ENCODE measurements at regions of chr1 and their contacts with region 1.

Region 1: GRCh38 chr1:114346480-114347029 is 164.4 kb downstream of the TRIM33 start:
- DNase-seq: peak; percentile 90
- ATAC-seq: peak; percentile 98
- H3K4me3 ChIP-seq: peak overlapping the region; percentile 49
- H3K27ac ChIP-seq: 0 out of 2 replicates have a peak overlapping the region, but pooled peaks have one; percentile 5
- H3K4me1 ChIP-seq: peaks cover 6% of the 10 kb centered on the region; the same call in 1 of the 2 replicates
- H3K27me3 ChIP-seq: peaks cover 5% of the 10 kb centered on the region; the same call in 1 of the 2 replicates
- CTCF ChIP-seq: peak; percentile 100; the same call in 1 of the 2 replicates
- POLR2A ChIP-seq: peak; percentile 43; the same call in 1 of the 2 replicates
- RAD21 ChIP-seq: peak; percentile 97

Region 2: GRCh38 chr1:114250683-114251572 is 95.6 kb before region 1 on chr1:
- CTCF ChIA-PET with region 1: no interaction called
- POLR2A ChIA-PET with region 1: no interaction called
- dilution Hi-C with region 1: no loop called
- in situ Hi-C with region 1: no loop called
- intact Hi-C with region 1: no loop called
- DNase-seq: no peak
- ATAC-seq: no peak
- H3K4me3 ChIP-seq: no peak overlapping the region
- H3K27ac ChIP-seq: no peak overlapping the region
- H3K4me1 ChIP-seq: no peaks in the 10 kb centered on the region
- H3K27me3 ChIP-seq: no peaks in the 10 kb centered on the region; the same call in none of the 2 replicates
- CTCF ChIP-seq: no peak
- POLR2A ChIP-seq: no peak
- RAD21 ChIP-seq: no peak

Region 3: DNA sequence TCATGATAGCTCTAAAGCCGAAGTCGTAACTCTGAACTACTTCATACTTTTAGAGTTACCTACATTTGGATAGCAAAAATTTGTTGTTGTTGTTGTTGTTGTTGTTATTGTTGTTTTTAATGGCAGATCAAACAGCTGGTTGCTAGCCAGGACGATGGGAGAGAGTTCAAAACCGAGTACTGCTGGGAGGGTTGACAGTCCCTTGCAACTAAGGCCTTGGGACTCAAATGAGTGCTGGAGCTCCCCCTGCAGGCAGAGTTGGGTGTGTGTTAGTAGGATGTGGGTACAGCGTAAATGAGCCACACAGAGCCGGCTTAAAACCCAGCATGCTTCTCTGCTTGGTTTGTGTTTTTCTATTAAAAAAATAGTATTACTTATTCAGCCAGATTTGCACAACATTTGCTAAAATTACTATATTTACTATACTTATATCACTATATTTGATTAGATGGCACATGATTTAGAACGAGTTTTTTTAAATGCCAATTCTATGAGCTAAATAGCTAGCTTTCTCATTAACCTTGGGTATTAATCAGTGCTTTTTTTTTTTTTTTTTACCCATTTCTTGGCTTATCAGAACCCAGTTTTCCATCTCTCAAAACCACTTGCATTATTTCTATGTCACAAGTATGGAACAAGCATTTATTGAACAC is 63.7 kb before region 1 on chr1:
- CTCF ChIA-PET with region 1: interaction called, 11 read pairs
- POLR2A ChIA-PET with region 1: no interaction called
- dilution Hi-C with region 1: no loop called
- in situ Hi-C with region 1: no loop called
- intact Hi-C with region 1: loop called (anchors 5 kb)
- DNase-seq: peak; percentile 87
- ATAC-seq: peak; percentile 100
- H3K4me3 ChIP-seq: no peak overlapping the region
- H3K27ac ChIP-seq: no peak overlapping the region
- H3K4me1 ChIP-seq: peaks cover 2% of the 10 kb centered on the region; the same call in 1 of the 2 replicates
- H3K27me3 ChIP-seq: peaks cover 6% of the 10 kb centered on the region
- CTCF ChIP-seq: peak; percentile 90
- POLR2A ChIP-seq: no peak
- RAD21 ChIP-seq: peak; percentile 74

Region 4: DNA sequence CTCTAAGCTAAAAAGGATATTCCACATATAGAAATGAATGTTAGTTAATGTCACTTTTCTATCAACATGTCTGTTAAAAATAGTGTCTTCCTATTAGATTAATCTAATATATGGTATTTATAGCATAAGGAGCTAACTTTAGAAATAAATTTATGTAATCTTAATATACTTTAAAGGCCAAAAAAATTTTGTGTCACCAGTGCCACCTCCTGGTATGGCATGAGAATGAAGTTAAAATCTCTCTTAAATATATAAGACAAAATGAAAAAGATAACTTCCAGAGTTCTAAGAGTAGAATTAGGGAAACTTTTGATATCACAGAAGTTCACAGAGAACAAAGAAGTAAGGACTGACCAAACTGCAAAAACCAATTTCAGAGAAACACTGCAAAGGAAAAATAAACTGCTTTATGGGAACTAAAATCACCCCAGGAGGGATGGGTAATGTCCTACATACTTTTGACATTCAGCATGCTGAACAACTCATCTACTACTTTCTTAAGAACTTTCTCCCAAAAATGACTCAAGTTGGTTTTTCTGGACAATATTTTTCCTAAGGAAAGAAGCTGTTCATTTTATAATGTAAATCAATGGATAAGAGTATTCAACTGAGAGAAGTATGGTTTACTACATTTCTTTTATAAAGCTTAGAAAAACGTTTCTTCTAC is 81.7 kb after region 1 on chr1:
- CTCF ChIA-PET with region 1: interaction called, 13 read pairs
- POLR2A ChIA-PET with region 1: interaction called, 3 read pairs
- dilution Hi-C with region 1: no loop called
- in situ Hi-C with region 1: no loop called
- intact Hi-C with region 1: loop called (anchors 2 kb)
- DNase-seq: peak; percentile 37
- ATAC-seq: peak; percentile 57
- H3K4me3 ChIP-seq: no peak overlapping the region
- H3K27ac ChIP-seq: no peak overlapping the region
- H3K4me1 ChIP-seq: no peaks in the 10 kb centered on the region
- H3K27me3 ChIP-seq: no peaks in the 10 kb centered on the region
- CTCF ChIP-seq: peak; percentile 53
- POLR2A ChIP-seq: no peak
- RAD21 ChIP-seq: peak; percentile 33

Region 5: DNA sequence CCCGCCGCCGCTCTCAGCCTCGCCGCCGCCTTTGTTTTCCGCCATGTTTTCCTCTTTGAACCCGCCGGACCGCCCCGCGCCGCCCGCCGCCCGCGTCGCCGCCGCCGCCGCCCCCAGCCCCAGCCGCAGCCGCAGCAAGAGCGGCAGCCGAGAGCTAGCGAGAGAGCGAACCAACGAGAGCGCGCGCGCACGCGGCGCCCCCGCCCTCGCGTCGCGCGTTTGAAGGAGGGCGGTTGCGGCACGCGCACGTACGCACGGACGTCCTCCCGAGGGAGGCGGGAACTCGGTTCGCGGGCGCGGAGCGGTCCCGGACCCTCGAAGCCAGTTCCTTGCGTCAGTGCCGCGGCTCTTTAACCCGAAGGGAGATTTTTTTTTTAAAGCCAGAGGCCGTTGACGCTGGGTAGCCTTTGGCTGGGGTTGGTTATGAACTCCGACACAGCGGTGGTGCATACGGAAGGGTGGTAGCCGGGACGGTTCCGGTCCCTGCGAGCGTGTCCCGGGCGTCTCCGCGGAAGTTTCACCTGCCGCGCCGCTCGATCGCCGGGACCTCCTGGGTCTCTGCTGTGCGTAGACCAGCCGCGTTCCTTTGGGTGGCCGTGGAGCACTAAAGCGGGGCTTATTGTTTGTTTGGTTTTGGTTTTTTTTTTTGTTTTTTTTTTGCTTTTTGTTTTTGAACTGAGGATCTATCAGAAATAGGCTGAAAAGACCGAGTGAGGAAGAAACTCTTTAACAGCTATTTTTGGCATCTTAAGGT is 164.7 kb after region 1 on chr1 and contains the start of gene TRIM33:
- CTCF ChIA-PET with region 1: no interaction called
- POLR2A ChIA-PET with region 1: no interaction called
- dilution Hi-C with region 1: no loop called
- in situ Hi-C with region 1: no loop called
- intact Hi-C with region 1: loop called (anchors 5 kb)
- DNase-seq: peak; percentile 94
- ATAC-seq: peak; percentile 92
- H3K4me3 ChIP-seq: peak within 1 kb of the TSS; percentile 82
- H3K27ac ChIP-seq: peak within 1 kb of the TSS; percentile 78
- H3K4me1 ChIP-seq: peaks cover 2% of the 10 kb centered on the region; the same call in 1 of the 2 replicates
- H3K27me3 ChIP-seq: no peaks in the 10 kb centered on the region
- CTCF ChIP-seq: no peak
- POLR2A ChIP-seq: peak; percentile 56; the same call in 1 of the 2 replicates
- RAD21 ChIP-seq: no peak
- total RNA-seq, gene TRIM33: 40.0 and 40.1 TPM in 2 replicates

Region 6: GRCh38 chr1:114558544-114558943 is 212.0 kb after region 1 on chr1:
- CTCF ChIA-PET with region 1: interaction called, 3 read pairs
- POLR2A ChIA-PET with region 1: no interaction called
- dilution Hi-C with region 1: no loop called
- in situ Hi-C with region 1: no loop called
- intact Hi-C with region 1: loop called (anchors 1 kb)
- DNase-seq: no peak
- ATAC-seq: no peak
- H3K4me3 ChIP-seq: no peak overlapping the region
- H3K27ac ChIP-seq: no peak overlapping the region
- H3K4me1 ChIP-seq: no peaks in the 10 kb centered on the region
- H3K27me3 ChIP-seq: no peaks in the 10 kb centered on the region
- CTCF ChIP-seq: 0 out of 2 replicates have a peak, but pooled peaks have one; percentile 24
- POLR2A ChIP-seq: no peak
- RAD21 ChIP-seq: 0 out of 2 replicates have a peak, but pooled peaks have one; percentile 5

Region 7: DNA sequence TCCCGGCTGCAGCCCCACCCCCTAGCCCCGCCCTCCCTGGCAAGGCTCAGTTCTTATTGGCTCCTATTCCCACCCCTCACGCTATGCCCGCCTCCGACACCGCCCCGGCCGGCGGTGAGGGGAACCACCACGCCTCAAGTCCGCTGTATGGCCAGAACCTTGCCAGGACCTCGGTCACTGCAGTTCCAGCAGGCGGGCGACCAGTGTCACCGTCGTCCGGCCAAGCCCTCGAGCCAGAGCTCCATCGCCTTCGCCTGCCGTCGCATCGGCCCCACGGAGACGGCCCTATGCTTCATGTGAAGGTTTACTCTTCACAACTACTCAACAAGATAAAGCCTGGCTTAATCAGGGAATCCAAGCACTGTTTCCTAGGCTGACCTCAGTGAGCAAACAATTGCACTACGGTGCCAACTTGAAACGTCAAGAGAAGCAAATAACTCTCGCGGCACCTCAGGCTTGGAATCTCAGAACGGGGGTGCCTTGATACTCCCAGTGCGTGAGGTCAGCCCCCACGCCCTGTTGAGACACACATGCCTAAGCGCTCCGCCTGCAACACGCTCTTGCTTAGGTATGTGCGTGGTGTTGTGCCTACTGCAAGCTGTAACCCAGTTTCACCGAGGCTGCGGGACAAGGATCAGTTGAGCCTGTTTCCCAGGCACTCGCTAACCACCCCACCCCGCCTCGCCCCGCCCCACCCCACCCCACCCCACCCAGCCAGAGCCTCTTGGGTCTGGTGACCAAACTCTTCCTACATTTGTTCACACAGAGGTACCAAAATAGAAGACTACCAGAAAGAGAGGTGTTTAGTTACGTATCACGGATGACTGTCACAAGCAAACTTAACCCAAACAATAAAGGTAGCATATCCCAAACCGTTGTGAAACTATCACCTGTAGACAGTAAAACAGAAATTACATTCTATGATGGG is 323.8 kb after region 1 on chr1:
- CTCF ChIA-PET with region 1: no interaction called
- POLR2A ChIA-PET with region 1: no interaction called
- dilution Hi-C with region 1: no loop called
- in situ Hi-C with region 1: no loop called
- intact Hi-C with region 1: loop called (anchors 2 kb)
- DNase-seq: peak; percentile 80
- ATAC-seq: peak; percentile 99
- H3K4me3 ChIP-seq: peak overlapping the region; percentile 92
- H3K27ac ChIP-seq: no peak overlapping the region
- H3K4me1 ChIP-seq: no peaks in the 10 kb centered on the region
- H3K27me3 ChIP-seq: peaks cover 5% of the 10 kb centered on the region
- CTCF ChIP-seq: no peak
- POLR2A ChIP-seq: peak; percentile 59; the same call in 1 of the 2 replicates
- RAD21 ChIP-seq: no peak

Region 8: GRCh38 chr1:114716304-114717170 is 370.0 kb after region 1 on chr1 and contains the start of gene NRAS:
- CTCF ChIA-PET with region 1: no interaction called
- POLR2A ChIA-PET with region 1: no interaction called
- dilution Hi-C with region 1: no loop called
- in situ Hi-C with region 1: no loop called
- intact Hi-C with region 1: loop called (anchors 2 kb)
- DNase-seq: peak; percentile 91
- ATAC-seq: peak; percentile 91
- H3K4me3 ChIP-seq: peak within 1 kb of the TSS; percentile 86
- H3K27ac ChIP-seq: peak within 1 kb of the TSS; percentile 96
- H3K4me1 ChIP-seq: no peaks in the 10 kb centered on the region
- H3K27me3 ChIP-seq: no peaks in the 10 kb centered on the region
- CTCF ChIP-seq: no peak
- POLR2A ChIP-seq: peak; percentile 74
- RAD21 ChIP-seq: no peak
- total RNA-seq, gene NRAS: 85.9 and 110 TPM in 2 replicates